ENCODE measurements at regions of chr21 and their contacts with region 1.

Region 1: DNA sequence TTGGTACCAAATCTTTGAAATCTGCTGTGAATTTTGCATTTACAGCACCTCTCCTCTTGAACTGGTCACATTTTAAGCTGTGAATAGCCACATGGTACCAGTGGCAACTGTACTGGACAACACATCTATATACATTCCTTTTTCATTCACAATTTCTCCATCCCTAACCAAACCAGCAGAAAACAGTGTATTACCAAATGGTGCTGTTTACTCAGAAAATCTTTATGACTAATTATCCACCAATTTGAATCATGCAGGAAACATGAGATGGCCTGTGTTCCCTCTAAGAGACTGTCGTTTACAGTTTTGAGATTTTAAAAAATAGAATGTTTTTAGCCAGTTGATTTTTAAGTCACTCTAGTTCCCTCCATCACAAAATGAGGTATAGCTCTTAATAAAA is 17.6 kb upstream of the CCT8 start:
- DNase-seq: peak; percentile 84
- ATAC-seq: peak; percentile 75
- H3K4me3 ChIP-seq: no peak overlapping the region
- H3K27ac ChIP-seq: 0 out of 2 replicates have a peak overlapping the region, but pooled peaks have one; percentile 94
- H3K4me1 ChIP-seq: peaks cover 17% of the 10 kb centered on the region
- H3K27me3 ChIP-seq: no peaks in the 10 kb centered on the region
- CTCF ChIP-seq: no peak
- POLR2A ChIP-seq: no peak
- RAD21 ChIP-seq: peak; percentile 17

Region 2: DNA sequence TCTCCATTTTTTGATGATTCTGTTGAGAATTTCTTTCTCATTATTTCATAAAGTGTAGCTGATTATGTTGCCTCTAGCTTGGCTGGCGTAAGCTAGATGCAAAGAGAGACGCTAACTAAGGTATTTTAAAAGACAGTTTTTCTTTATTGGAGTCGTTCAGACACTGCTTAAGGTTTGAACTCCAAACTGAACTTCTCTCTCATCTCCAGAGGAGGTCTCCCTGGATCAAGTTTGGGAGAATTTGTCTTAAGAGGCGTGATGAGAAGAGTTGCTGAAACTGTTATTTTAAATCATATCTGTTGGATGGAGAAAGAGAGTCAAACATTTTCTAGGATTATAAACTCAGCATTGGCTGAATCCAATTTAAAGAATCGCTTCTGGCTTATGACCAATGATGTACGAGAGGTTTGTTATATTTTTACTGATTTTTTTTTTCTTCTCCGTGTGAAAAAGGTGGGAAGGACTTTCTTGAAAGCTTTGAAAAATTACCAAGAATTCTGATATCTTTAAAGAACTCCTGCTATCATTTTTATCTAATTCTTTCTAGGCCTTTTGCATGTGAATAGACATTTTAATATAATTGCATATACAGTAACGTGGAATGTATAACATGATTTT is 73.4 kb after region 1 on chr21:
- CTCF ChIA-PET with region 1: interaction called, 9 read pairs
- POLR2A ChIA-PET with region 1: no interaction called
- dilution Hi-C with region 1: no loop called
- in situ Hi-C with region 1: no loop called
- intact Hi-C with region 1: loop called (anchors 1 kb)
- DNase-seq: peak; percentile 91
- ATAC-seq: peak; percentile 79
- H3K4me3 ChIP-seq: no peak overlapping the region
- H3K27ac ChIP-seq: no peak overlapping the region
- H3K4me1 ChIP-seq: peaks cover 5% of the 10 kb centered on the region; the same call in 1 of the 2 replicates
- H3K27me3 ChIP-seq: no peaks in the 10 kb centered on the region
- CTCF ChIP-seq: peak; percentile 90
- POLR2A ChIP-seq: 0 out of 2 replicates have a peak, but pooled peaks have one; percentile 34
- RAD21 ChIP-seq: peak; percentile 97

Region 3: GRCh38 chr21:29298348-29299045 is 207.5 kb after region 1 on chr21 and contains the start of gene BACH1:
- CTCF ChIA-PET with region 1: interaction called, 3 read pairs
- POLR2A ChIA-PET with region 1: no interaction called
- dilution Hi-C with region 1: no loop called
- in situ Hi-C with region 1: no loop called
- intact Hi-C with region 1: loop called (anchors 1 kb)
- DNase-seq: peak; percentile 91
- ATAC-seq: peak; percentile 81
- H3K4me3 ChIP-seq: peak within 1 kb of the TSS; percentile 96
- H3K27ac ChIP-seq: peak within 1 kb of the TSS; percentile 95
- H3K4me1 ChIP-seq: peaks cover 3% of the 10 kb centered on the region; the same call in 1 of the 2 replicates
- H3K27me3 ChIP-seq: no peaks in the 10 kb centered on the region
- CTCF ChIP-seq: peak; percentile 62
- POLR2A ChIP-seq: peak; percentile 97
- RAD21 ChIP-seq: peak; percentile 60
- total RNA-seq, gene BACH1: 108 and 132 TPM in 2 replicates

Region 4: GRCh38 chr21:29372063-29372802 is 281.2 kb after region 1 on chr21:
- CTCF ChIA-PET with region 1: interaction called, 5 read pairs
- POLR2A ChIA-PET with region 1: no interaction called
- dilution Hi-C with region 1: no loop called
- in situ Hi-C with region 1: loop called (anchors 5 kb)
- intact Hi-C with region 1: loop called (anchors 1 kb)
- DNase-seq: peak; percentile 84
- ATAC-seq: peak; percentile 94
- H3K4me3 ChIP-seq: no peak overlapping the region
- H3K27ac ChIP-seq: no peak overlapping the region
- H3K4me1 ChIP-seq: peaks cover 2% of the 10 kb centered on the region; the same call in 1 of the 2 replicates
- H3K27me3 ChIP-seq: no peaks in the 10 kb centered on the region
- CTCF ChIP-seq: peak; percentile 82
- POLR2A ChIP-seq: no peak
- RAD21 ChIP-seq: peak; percentile 93

Region 5: DNA sequence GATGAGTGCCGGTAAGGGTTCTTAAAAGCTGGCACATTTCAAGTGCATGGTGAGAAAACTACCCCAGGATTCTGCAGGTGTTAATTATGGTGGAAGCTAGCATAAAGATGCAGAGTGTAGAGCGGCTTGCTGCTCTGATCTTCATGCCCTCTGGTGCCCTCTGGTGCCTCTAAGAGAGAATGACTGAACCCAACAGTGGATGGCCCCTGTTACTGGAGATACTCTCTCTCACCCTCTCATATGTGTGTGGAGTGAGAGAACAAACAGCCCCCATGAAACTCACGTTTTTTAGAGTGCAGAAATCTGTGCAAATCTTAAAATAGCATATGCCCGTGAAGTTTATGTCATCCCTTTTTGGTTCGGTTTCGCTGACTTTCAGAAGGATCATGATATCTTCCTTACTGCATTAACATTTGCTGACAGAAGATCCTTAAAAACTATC is 758.7 kb after region 1 on chr21:
- CTCF ChIA-PET with region 1: no interaction called
- POLR2A ChIA-PET with region 1: no interaction called
- dilution Hi-C with region 1: no loop called
- in situ Hi-C with region 1: loop called (anchors 5 kb)
- intact Hi-C with region 1: loop called (anchors 1 kb)
- DNase-seq: peak; percentile 57
- ATAC-seq: peak; percentile 100
- H3K4me3 ChIP-seq: no peak overlapping the region
- H3K27ac ChIP-seq: no peak overlapping the region
- H3K4me1 ChIP-seq: no peaks in the 10 kb centered on the region
- H3K27me3 ChIP-seq: no peaks in the 10 kb centered on the region; the same call in none of the 2 replicates
- CTCF ChIP-seq: peak; percentile 78
- POLR2A ChIP-seq: 0 out of 2 replicates have a peak, but pooled peaks have one; percentile 22
- RAD21 ChIP-seq: peak; percentile 88

Region 6: GRCh38 chr21:30044445-30045064 is 953.5 kb after region 1 on chr21:
- CTCF ChIA-PET with region 1: no interaction called
- POLR2A ChIA-PET with region 1: no interaction called
- dilution Hi-C with region 1: no loop called
- in situ Hi-C with region 1: no loop called
- intact Hi-C with region 1: loop called (anchors 5 kb)
- DNase-seq: peak; percentile 7
- ATAC-seq: peak; percentile 21; the same call in 1 of the 2 replicates
- H3K4me3 ChIP-seq: no peak overlapping the region
- H3K27ac ChIP-seq: no peak overlapping the region
- H3K4me1 ChIP-seq: no peaks in the 10 kb centered on the region
- H3K27me3 ChIP-seq: no peaks in the 10 kb centered on the region
- CTCF ChIP-seq: peak; percentile 74
- POLR2A ChIP-seq: no peak
- RAD21 ChIP-seq: peak; percentile 38; the same call in 1 of the 2 replicates